Activated CD4-positive, alpha-beta memory T cell treated with anti-CD3 and anti-CD28 coated beads for 36 hours (primary cell): ENCODE measurements at regions of chr1 and their contacts with region 1.

Region 1: DNA sequence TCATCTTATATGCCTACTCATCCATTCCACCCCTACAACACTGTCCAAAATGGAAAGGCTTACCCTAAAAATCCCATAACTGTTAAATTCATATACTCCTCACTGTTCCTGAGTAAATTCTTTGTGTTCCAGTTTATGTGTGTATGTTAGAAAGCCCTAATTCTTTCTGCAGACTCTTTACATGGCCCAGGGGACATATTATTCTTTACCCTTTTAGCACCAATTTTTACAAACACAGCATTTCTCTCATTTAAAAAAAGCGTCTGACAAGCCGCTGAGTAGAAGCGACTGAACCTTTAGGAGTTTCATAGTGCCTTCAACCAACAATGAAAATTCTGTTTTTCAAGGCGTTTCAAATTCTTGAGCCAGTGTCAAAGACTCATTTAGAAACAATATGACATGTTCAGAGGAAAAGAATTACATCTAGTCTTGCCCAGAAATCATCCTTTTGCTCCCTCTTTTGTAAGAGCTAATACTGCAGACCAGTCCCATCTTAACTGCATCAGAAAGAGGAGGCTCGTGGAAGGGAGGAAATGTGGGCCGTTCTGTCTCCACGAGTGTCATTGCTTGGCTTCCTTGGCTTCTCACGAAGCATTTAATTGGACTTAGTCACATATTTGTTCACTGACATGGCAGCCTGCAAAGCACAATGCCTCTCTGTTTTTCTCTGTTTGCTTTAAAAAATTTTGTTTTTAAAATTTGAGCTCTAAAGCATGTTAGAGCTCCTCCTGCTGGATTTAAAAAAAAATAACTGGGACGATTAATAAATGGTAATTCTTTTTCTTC is 21.3 kb upstream of the C1orf105 start:
- DNase-seq: peak; percentile 41
- H3K4me3 Mint-ChIP-seq: peak overlapping the region; percentile 15
- H3K27ac Mint-ChIP-seq: peak overlapping the region; percentile 72
- H3K4me1 Mint-ChIP-seq: peaks cover 67% of the 10 kb centered on the region
- H3K27me3 Mint-ChIP-seq: no peaks in the 10 kb centered on the region

Region 2: GRCh38 chr1:171984850-171985485 is 414.2 kb before region 1 on chr1:
- CTCF ChIA-PET with region 1: interaction called, 11 read pairs
- POLR2A ChIA-PET with region 1: no interaction called
- intact Hi-C with region 1: no loop called
- DNase-seq: no peak
- H3K4me3 Mint-ChIP-seq: no peak overlapping the region
- H3K27ac Mint-ChIP-seq: no peak overlapping the region
- H3K4me1 Mint-ChIP-seq: no peaks in the 10 kb centered on the region
- H3K27me3 Mint-ChIP-seq: peaks cover 1% of the 10 kb centered on the region

Region 3: DNA sequence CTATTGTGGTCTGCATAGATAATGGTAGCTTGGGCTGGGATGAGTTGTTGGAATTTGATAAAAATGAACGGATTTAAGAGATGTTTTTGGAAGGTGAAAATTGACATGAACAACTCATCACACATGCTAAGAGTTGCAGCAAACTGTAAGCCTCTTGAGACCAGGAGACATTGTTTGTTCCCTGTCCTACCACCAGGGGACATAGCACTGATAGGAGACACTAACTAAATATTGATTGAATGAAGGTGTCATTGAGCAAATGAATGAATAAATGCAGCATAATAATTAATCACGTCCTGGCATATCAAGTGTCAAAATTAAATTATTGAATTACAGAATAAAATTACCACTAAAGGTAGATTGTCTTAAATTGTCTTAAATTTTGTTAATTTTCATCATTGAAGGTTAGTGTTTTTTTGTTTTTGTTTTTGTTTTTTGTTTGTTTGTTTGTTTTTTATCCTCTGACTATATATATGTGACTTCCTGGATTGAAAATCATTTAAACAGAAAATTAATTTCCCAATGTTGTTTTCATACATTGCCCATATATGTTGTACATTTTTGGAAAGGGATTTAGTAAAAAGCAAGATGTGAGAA is 264.0 kb before region 1 on chr1:
- CTCF ChIA-PET with region 1: interaction called, 6 read pairs
- POLR2A ChIA-PET with region 1: no interaction called
- intact Hi-C with region 1: loop called (anchors 1 kb)
- DNase-seq: no peak
- H3K4me3 Mint-ChIP-seq: no peak overlapping the region
- H3K27ac Mint-ChIP-seq: peak overlapping the region; percentile 29
- H3K4me1 Mint-ChIP-seq: peaks cover 18% of the 10 kb centered on the region
- H3K27me3 Mint-ChIP-seq: no peaks in the 10 kb centered on the region

Region 4: DNA sequence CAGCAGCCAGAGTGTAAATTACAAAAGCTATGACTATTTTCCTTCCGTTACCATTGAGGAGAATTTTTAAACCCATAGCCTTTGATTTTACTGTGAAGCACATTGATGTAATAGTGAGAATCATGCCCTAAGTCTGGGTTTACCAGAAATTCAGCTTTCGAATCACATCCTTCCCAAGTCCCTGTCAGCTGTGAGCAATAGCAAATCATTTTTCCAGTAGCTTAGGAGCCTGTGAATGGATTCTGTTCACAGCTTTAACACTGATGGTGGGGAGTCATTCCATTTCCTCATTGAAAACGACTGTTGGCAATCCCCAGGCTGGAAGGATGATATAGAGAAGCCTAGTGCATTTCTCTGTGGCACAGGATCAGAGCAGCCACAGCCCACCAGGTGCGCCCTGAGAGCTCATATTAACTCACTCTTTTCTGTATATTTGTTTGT is 60.8 kb before region 1 on chr1:
- CTCF ChIA-PET with region 1: interaction called, 23 read pairs
- POLR2A ChIA-PET with region 1: interaction called, 9 read pairs
- intact Hi-C with region 1: loop called (anchors 1 kb)
- DNase-seq: peak; percentile 81
- H3K4me3 Mint-ChIP-seq: no peak overlapping the region
- H3K27ac Mint-ChIP-seq: peak overlapping the region; percentile 69
- H3K4me1 Mint-ChIP-seq: peaks cover 41% of the 10 kb centered on the region
- H3K27me3 Mint-ChIP-seq: no peaks in the 10 kb centered on the region

Region 5: GRCh38 chr1:172411791-172412338 is 12.7 kb after region 1 on chr1:
- CTCF ChIA-PET with region 1: interaction called, 10 read pairs
- POLR2A ChIA-PET with region 1: interaction called, 3 read pairs
- intact Hi-C with region 1: no loop called
- DNase-seq: no peak
- H3K4me3 Mint-ChIP-seq: no peak overlapping the region
- H3K27ac Mint-ChIP-seq: no peak overlapping the region
- H3K4me1 Mint-ChIP-seq: peaks cover 11% of the 10 kb centered on the region
- H3K27me3 Mint-ChIP-seq: no peaks in the 10 kb centered on the region

Region 6: DNA sequence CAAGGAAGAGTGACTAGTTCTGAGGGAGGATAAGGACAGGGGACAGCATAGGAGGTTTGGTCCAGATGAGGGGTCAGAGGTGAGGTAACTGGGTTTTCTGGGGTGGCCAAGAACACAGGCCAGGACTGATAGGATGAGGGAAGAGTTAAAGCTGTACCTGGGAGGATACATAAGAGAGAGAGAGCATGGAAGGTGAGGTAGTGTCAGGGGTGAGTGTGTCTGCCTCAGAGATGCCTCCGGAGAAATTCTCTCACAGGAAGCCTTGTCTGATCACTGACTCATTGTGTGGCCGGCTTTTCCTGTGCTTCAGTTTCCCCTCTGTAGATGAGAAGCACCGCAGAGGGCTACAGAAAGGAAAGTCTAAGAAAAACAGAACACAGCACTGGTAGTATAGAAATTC is 299.9 kb after region 1 on chr1:
- CTCF ChIA-PET with region 1: no interaction called
- POLR2A ChIA-PET with region 1: no interaction called
- intact Hi-C with region 1: loop called (anchors 5 kb)
- DNase-seq: peak; percentile 86
- H3K4me3 Mint-ChIP-seq: peak overlapping the region; percentile 14
- H3K27ac Mint-ChIP-seq: peak overlapping the region; percentile 88
- H3K4me1 Mint-ChIP-seq: peaks cover 50% of the 10 kb centered on the region
- H3K27me3 Mint-ChIP-seq: no peaks in the 10 kb centered on the region

Region 7: DNA sequence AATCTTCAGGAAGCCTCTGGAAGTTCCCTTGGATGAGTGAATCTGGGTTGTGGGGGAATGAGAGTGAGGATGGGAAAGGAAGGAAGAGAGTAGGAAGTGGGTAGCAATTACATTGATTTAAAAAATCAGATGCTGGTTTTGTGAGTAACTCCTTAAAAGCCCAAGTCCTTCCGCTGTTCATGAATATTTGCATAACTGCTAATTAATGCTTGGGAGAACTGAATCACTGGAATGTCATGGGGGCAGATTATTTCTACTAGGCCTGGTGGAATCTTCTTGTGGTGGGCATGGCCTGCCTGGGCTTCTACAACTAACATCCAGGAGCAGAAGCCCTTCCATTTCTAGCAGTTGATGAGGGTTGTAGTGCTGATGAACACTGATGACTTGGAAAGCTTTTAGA is 312.4 kb after region 1 on chr1:
- CTCF ChIA-PET with region 1: no interaction called
- POLR2A ChIA-PET with region 1: no interaction called
- intact Hi-C with region 1: no loop called
- DNase-seq: no peak
- H3K4me3 Mint-ChIP-seq: no peak overlapping the region
- H3K27ac Mint-ChIP-seq: no peak overlapping the region
- H3K4me1 Mint-ChIP-seq: peaks cover 59% of the 10 kb centered on the region
- H3K27me3 Mint-ChIP-seq: no peaks in the 10 kb centered on the region